ENCODE measurements at regions of chr11 and their contacts with region 1.

Region 1: GRCh38 chr11:75204685-75205563 is 35.6 kb upstream of the TPBGL start:
- DNase-seq: peak; percentile 8
- ATAC-seq: peak; percentile 100
- H3K4me3 ChIP-seq: no peak overlapping the region
- H3K27ac ChIP-seq: no peak overlapping the region
- H3K4me1 ChIP-seq: no peaks in the 10 kb centered on the region
- H3K27me3 ChIP-seq: peaks cover 0 to 4% of the 10 kb centered on the region in 2 experiments; a peak in 1 of 4 replicates
- CTCF ChIP-seq: peak; percentile 87 to 94 (median 89)
- EP300 ChIP-seq: no peak
- POLR2A ChIP-seq: no peak
- RAD21 ChIP-seq: peak; percentile 84

Region 2: DNA sequence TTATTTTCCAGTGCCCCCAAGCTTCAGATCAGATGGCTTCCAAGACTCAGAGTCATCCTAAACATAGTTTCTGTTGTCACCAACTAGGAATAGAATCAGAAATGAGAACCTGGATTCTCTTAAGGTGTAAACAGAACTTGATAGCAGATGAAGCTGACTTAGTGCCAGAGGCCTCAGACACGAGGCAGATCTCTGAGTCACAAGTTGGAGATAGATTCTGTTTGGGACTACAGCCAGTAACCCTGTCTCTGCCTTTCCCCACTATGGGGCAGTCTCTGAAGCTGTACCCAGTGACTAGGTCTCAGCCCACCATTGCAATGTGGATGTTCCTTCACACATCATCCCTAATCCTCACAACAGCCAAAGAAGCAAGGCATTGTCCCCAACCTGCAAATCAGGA is 190.8 kb before region 1 on chr11:
- CTCF ChIA-PET with region 1: interaction called, 16 read pairs
- POLR2A ChIA-PET with region 1: no interaction called
- RAD21 ChIA-PET with region 1: no interaction called
- SMC1A ChIA-PET with region 1: no interaction called
- in situ Hi-C with region 1: no loop called
- intact Hi-C with region 1: no loop called
- DNase-seq: no peak
- ATAC-seq: no peak
- H3K4me3 ChIP-seq: no peak overlapping the region
- H3K27ac ChIP-seq: no peak overlapping the region
- H3K4me1 ChIP-seq: no peaks in the 10 kb centered on the region
- H3K27me3 ChIP-seq: no peaks in the 10 kb centered on the region
- CTCF ChIP-seq: no peak
- EP300 ChIP-seq: no peak
- POLR2A ChIP-seq: no peak
- RAD21 ChIP-seq: no peak

Region 3: DNA sequence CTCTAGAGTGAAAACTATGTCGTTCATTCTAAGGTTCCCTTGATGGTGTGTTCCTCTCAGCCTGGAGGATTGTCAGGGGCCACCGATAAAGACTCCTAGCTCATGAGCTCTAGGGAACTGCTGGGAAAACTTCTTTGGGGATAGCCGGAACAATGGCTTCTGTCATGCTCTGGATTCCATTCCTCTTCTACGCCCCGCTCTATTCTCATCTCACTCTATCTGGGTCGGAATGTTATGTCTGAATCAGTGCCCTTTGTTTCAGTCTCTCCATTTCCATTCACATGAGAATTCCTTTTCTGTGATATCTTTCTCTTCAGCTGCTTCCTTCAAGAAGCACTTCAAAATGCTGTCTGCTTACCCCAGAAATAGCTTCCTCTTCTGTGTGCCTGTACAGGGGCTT is 70.9 kb before region 1 on chr11:
- CTCF ChIA-PET with region 1: interaction called, 232 read pairs
- POLR2A ChIA-PET with region 1: no interaction called
- RAD21 ChIA-PET with region 1: interaction called, 132 read pairs
- SMC1A ChIA-PET with region 1: interaction called, 111 read pairs
- in situ Hi-C with region 1: no loop called
- intact Hi-C with region 1: no loop called
- DNase-seq: no peak
- ATAC-seq: no peak
- H3K4me3 ChIP-seq: no peak overlapping the region
- H3K27ac ChIP-seq: no peak overlapping the region
- H3K4me1 ChIP-seq: no peaks in the 10 kb centered on the region
- H3K27me3 ChIP-seq: no peaks in the 10 kb centered on the region; a peak in 1 of 4 replicates
- CTCF ChIP-seq: no peak
- EP300 ChIP-seq: no peak
- POLR2A ChIP-seq: no peak
- RAD21 ChIP-seq: no peak

Region 4: GRCh38 chr11:75147875-75148263 is 57.1 kb before region 1 on chr11:
- CTCF ChIA-PET with region 1: interaction called, 232 read pairs
- POLR2A ChIA-PET with region 1: no interaction called
- RAD21 ChIA-PET with region 1: interaction called, 132 read pairs
- SMC1A ChIA-PET with region 1: interaction called, 111 read pairs
- in situ Hi-C with region 1: loop called (anchors 5 kb)
- intact Hi-C with region 1: loop called (anchors 1 kb)
- DNase-seq: no peak
- ATAC-seq: no peak
- H3K4me3 ChIP-seq: no peak overlapping the region
- H3K27ac ChIP-seq: no peak overlapping the region
- H3K4me1 ChIP-seq: peaks cover 12% of the 10 kb centered on the region
- H3K27me3 ChIP-seq: no peaks in the 10 kb centered on the region
- CTCF ChIP-seq: no peak
- EP300 ChIP-seq: no peak
- POLR2A ChIP-seq: no peak
- RAD21 ChIP-seq: no peak

Region 5: GRCh38 chr11:75286826-75287465 is 82.0 kb after region 1 on chr11:
- CTCF ChIA-PET with region 1: no interaction called
- POLR2A ChIA-PET with region 1: no interaction called
- RAD21 ChIA-PET with region 1: no interaction called
- SMC1A ChIA-PET with region 1: no interaction called
- in situ Hi-C with region 1: no loop called
- intact Hi-C with region 1: no loop called
- DNase-seq: no peak
- ATAC-seq: no peak
- H3K4me3 ChIP-seq: no peak overlapping the region
- H3K27ac ChIP-seq: no peak overlapping the region
- H3K4me1 ChIP-seq: no peaks in the 10 kb centered on the region
- H3K27me3 ChIP-seq: no peaks in the 10 kb centered on the region
- CTCF ChIP-seq: no peak
- EP300 ChIP-seq: no peak
- POLR2A ChIP-seq: no peak
- RAD21 ChIP-seq: no peak

Measured in GM12878 (cell line).